ENCODE measurements at regions of chr9 and their contacts with region 1.

Region 1: GRCh38 chr9:35972093-35972492 is 14.1 kb upstream of the OR2S2 start:
- DNase-seq: no peak
- H3K4me3 ChIP-seq: no peak overlapping the region
- H3K27ac ChIP-seq: no peak overlapping the region
- H3K4me1 ChIP-seq: no peaks in the 10 kb centered on the region
- H3K27me3 ChIP-seq: peaks cover 2% of the 10 kb centered on the region
- CTCF ChIP-seq: no peak

Region 2: GRCh38 chr9:34974664-34975063 is 997.4 kb before region 1 on chr9:
- CTCF ChIA-PET with region 1: interaction called, 10 read pairs
- dilution Hi-C with region 1: no loop called
- in situ Hi-C with region 1: no loop called
- intact Hi-C with region 1: no loop called
- DNase-seq: no peak
- H3K4me3 ChIP-seq: no peak overlapping the region
- H3K27ac ChIP-seq: no peak overlapping the region
- H3K4me1 ChIP-seq: no peaks in the 10 kb centered on the region
- H3K27me3 ChIP-seq: no peaks in the 10 kb centered on the region
- CTCF ChIP-seq: no peak